Mammary epithelial cell (primary cell): ENCODE measurements at regions of chr1 and their contacts with region 1.

Region 1: DNA sequence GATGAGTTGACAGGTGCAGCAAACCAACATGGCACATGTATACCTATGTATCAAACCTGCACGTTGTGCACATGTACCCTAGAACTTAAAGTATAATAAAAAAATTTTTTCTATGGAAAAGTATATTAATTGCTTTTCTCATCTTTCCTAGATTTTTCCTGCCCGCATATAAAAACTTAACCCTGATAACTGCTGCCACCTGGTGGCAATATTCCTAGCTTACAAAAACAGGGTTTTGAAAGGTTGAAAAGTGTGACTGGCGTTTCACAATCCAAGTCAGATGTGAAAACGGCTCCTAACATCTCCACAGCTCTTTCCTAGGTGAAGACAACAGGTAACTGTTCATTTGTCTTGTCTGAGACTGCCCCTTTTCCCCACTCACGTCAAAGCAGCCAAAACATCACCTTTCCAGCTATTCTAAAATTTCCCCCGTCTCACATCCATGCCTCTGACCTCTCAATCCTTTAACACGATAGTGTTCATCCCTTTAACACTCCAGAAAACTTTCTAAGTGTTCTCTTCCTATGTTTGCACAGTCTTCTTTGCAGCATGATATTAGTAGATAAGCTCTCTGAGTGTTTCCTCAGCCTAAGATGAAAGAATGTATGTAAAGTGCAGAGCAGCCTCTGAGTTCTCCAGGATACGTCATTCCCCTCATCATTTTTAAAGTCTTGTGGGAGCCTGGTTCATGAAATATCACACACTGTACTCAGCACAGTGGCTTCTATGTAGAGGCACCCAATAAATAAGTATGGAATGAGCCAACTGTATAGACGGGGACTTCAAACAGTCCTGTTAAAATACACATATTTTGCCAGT is 27.5 kb downstream of the OVGP1 start:
- DNase-seq: peak; percentile 23
- H3K4me3 ChIP-seq: no peak overlapping the region
- H3K27ac ChIP-seq: no peak overlapping the region
- H3K4me1 ChIP-seq: no peaks in the 10 kb centered on the region
- H3K27me3 ChIP-seq: no peaks in the 10 kb centered on the region
- CTCF ChIP-seq: peak; percentile 42 to 70

Region 2: GRCh38 chr1:111346089-111346885 is 53.7 kb before region 1 on chr1:
- CTCF ChIA-PET with region 1: no interaction called
- dilution Hi-C with region 1: no loop called
- in situ Hi-C with region 1: no loop called
- intact Hi-C with region 1: loop called (anchors 5 kb)
- DNase-seq: peak; percentile 66
- H3K4me3 ChIP-seq: peak overlapping the region; percentile 47 to 63 (median 50)
- H3K27ac ChIP-seq: peak overlapping the region; percentile 30
- H3K4me1 ChIP-seq: peaks cover 9% of the 10 kb centered on the region
- H3K27me3 ChIP-seq: no peaks in the 10 kb centered on the region
- CTCF ChIP-seq: peak in 1 of 2 donors; percentile 31

Region 3: DNA sequence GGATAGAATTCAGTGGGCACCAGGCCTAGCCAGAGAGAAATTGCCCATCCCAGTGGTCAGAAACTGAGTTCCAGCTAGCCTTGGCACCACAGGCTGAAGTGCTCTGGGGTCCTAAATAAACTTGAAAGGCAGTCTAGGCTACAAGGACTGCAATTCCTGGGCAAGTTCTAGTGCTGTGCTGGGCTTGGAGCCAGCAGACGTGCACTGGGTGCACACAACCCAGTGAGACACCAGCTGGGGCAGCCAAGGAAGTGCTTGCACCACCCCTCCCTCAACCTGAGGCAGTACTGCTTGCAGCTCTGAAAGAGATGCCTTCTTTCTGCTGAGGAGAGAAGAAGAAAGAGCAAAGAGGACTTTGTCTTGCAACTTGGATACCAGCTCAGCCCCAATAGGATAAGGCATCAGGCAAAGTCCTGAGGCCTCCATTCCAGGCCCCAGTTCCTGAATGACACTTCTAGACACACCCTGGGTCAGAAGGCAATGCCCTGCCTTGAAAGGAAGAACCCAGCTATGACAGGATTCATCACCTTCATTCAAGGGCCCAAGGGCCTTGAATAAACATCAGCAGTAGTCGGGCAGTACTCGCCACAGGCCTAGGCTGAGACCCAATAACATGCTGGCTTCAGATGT is 27.6 kb before region 1 on chr1:
- CTCF ChIA-PET with region 1: no interaction called
- dilution Hi-C with region 1: no loop called
- in situ Hi-C with region 1: no loop called
- intact Hi-C with region 1: no loop called
- DNase-seq: no peak
- H3K4me3 ChIP-seq: no peak overlapping the region
- H3K27ac ChIP-seq: no peak overlapping the region
- H3K4me1 ChIP-seq: no peaks in the 10 kb centered on the region
- H3K27me3 ChIP-seq: no peaks in the 10 kb centered on the region
- CTCF ChIP-seq: no peak

Region 4: GRCh38 chr1:111424281-111424680 is 24.3 kb after region 1 on chr1:
- CTCF ChIA-PET with region 1: no interaction called
- dilution Hi-C with region 1: no loop called
- in situ Hi-C with region 1: no loop called
- intact Hi-C with region 1: no loop called
- DNase-seq: no peak
- H3K4me3 ChIP-seq: no peak overlapping the region
- H3K27ac ChIP-seq: no peak overlapping the region
- H3K4me1 ChIP-seq: peaks cover 22% of the 10 kb centered on the region
- H3K27me3 ChIP-seq: peaks cover 6% of the 10 kb centered on the region
- CTCF ChIP-seq: no peak